ENCODE measurements at regions of chr10 and their contacts with region 1.

Region 1: DNA sequence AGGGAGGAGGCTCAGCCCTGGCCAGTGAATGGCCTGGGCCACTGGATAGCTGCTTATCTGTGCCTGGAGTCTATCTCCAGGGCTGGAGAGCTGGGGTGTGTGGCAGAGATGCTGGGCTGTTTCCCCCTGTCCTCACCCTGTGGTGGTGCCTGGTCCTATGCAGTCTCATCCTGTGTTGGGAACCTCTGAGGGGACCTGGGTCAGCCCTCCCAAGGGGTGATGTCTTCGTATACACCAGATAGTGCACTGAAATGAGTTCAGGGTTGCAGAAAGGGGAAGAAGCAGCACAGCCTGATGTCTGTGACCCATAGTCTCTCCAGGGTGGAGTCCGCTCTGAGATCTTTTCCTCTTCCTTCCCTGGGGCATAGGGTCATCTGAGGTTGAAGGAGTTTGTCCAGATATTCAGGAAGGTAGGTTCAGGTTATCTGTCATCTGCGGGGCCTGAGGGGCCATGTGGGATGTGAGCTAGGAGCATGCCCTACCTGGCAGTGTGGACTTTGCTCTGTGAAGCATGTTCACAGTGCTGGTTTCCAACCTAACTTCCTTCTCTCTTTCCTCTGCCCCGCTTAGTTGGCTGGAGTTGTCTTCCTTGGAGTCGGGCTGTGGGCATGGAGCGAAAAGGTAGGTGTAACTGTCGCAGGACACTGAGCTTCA is 33.4 kb upstream of the SH2D4B start:
- DNase-seq: peak; percentile 75
- H3K4me3 ChIP-seq: no peak overlapping the region
- H3K27ac ChIP-seq: peak overlapping the region in 1 of 2 experiments; percentile 92; a peak in 2 of 4 replicates
- H3K4me1 ChIP-seq: peaks cover 21 to 69% of the 10 kb centered on the region in 2 experiments; a peak in 3 of 4 replicates
- H3K27me3 ChIP-seq: no peaks in the 10 kb centered on the region
- CTCF ChIP-seq: no peak
- EP300 ChIP-seq: no peak
- RAD21 ChIP-seq: peak; percentile 15; the same call in 1 of the 2 replicates

Region 2: GRCh38 chr10:80382989-80383388 is 121.3 kb before region 1 on chr10:
- CTCF ChIA-PET with region 1: interaction called, 144 read pairs
- POLR2A ChIA-PET with region 1: interaction called, 4 read pairs
- DNase-seq: peak; percentile 68
- H3K4me3 ChIP-seq: peak overlapping the region in 1 of 2 experiments; percentile 7; a peak in 1 of 4 replicates
- H3K27ac ChIP-seq: no peak overlapping the region
- H3K4me1 ChIP-seq: peaks cover 0 to 3% of the 10 kb centered on the region in 2 experiments; a peak in 1 of 4 replicates
- H3K27me3 ChIP-seq: no peaks in the 10 kb centered on the region; the same call in 1 of the 2 replicates
- CTCF ChIP-seq: peak; percentile 81
- EP300 ChIP-seq: no peak
- RAD21 ChIP-seq: peak; percentile 85

Region 3: DNA sequence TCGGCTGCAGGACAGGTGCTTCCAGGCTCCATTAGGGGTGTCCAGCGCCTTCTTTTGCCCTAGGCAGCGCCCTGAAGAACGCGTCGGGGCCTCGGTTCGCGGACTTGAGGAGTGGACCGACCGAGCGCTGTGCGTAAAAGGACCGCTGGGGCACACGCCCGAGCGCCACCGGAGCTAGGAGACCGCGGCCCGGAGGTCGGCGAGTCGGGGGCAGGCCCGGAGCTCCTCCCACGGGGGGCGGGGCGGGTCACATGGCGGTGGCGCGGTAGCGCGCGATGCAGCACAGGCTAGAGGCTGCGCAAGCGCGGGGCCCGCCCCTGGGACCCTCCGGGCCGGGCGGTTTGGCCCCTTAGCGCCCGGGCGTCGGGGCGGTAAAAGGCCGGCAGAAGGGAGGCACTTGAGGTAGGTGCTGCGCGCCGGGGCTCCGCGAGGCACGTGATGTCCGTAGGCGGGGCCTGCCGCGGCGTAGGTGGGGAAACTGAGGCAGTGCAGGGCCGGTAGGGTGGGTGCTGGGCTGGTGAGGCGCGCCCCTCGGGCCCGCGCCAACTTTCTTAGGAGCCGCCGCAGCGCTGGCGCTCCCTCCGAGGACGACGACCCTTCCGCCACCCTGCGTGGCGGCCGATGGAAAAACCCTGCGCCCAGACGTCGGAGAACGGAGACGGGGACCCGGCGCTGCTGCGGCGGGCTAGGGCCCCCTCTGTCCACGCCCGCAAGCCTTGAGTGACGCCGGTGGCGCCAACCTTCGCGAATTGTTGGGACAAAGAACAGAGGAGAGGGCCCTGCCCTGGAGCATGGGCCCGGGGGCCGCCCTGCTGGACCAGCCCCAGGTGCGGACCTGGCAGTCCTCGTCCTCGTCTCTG is 95.8 kb before region 1 on chr10 and contains the start of gene PRXL2A:
- CTCF ChIA-PET with region 1: interaction called, 19 read pairs
- POLR2A ChIA-PET with region 1: interaction called, 6 read pairs
- DNase-seq: peak; percentile 99
- H3K4me3 ChIP-seq: peak within 1 kb of the TSS; percentile 69 to 88
- H3K27ac ChIP-seq: peak within 1 kb of the TSS in 1 of 2 experiments; percentile 78; a peak in 3 of 4 replicates
- H3K4me1 ChIP-seq: peaks cover 15 to 51% of the 10 kb centered on the region in 2 experiments; a peak in 3 of 4 replicates
- H3K27me3 ChIP-seq: no peaks in the 10 kb centered on the region
- CTCF ChIP-seq: no peak
- EP300 ChIP-seq: no peak
- RAD21 ChIP-seq: no peak
- polyA plus RNA-seq, gene PRXL2A: 14.0 and 15.6 TPM in 2 replicates

Region 4: DNA sequence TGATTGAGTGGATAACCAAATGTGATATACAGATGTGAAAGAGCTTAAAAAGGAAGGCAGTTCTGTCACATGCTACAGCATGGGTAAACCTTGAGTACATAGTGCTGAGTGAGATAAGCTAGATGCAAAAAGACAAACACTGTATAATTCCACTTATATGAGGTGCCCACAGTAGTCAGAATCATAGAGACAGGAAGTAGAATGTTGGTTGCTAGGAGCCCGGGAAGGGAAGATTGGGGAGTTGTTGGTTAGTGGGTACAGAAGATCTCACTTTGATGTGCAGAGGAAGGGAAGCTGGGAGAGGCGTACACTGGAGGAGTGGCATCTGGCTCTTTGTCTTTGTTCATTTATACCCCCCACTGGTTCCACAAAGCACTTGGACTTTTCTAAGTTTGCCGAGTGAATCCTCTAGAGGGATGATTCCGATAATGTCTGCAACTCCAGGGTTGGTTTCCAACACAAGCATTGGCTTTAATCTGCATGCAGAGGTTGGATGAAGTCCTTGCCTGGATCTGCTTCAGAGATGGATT is 10.7 kb before region 1 on chr10:
- CTCF ChIA-PET with region 1: interaction called, 82 read pairs
- POLR2A ChIA-PET with region 1: no interaction called
- DNase-seq: no peak
- H3K4me3 ChIP-seq: no peak overlapping the region
- H3K27ac ChIP-seq: peak overlapping the region in 1 of 2 experiments; percentile 23; a peak in 2 of 4 replicates
- H3K4me1 ChIP-seq: peaks cover 8 to 23% of the 10 kb centered on the region in 2 experiments; a peak in 3 of 4 replicates
- H3K27me3 ChIP-seq: no peaks in the 10 kb centered on the region
- CTCF ChIP-seq: no peak
- EP300 ChIP-seq: no peak
- RAD21 ChIP-seq: no peak

Region 5: GRCh38 chr10:80526742-80527141 is 22.5 kb after region 1 on chr10:
- CTCF ChIA-PET with region 1: interaction called, 17 read pairs
- POLR2A ChIA-PET with region 1: no interaction called
- DNase-seq: no peak
- H3K4me3 ChIP-seq: no peak overlapping the region
- H3K27ac ChIP-seq: no peak overlapping the region
- H3K4me1 ChIP-seq: no peaks in the 10 kb centered on the region
- H3K27me3 ChIP-seq: no peaks in the 10 kb centered on the region
- CTCF ChIP-seq: no peak
- EP300 ChIP-seq: no peak
- RAD21 ChIP-seq: no peak